ENCODE measurements at regions of chr7 and their contacts with region 1.

Region 1: GRCh38 chr7:7761340-7761980 is 43.1 kb upstream of the RPA3 start:
- DNase-seq: no peak
- H3K4me3 ChIP-seq: peak overlapping the region; percentile 10 to 25
- H3K27ac ChIP-seq: peak overlapping the region; percentile 58 to 65
- H3K4me1 ChIP-seq: no peaks in the 10 kb centered on the region
- H3K27me3 ChIP-seq: no peaks in the 10 kb centered on the region
- CTCF ChIP-seq: peak in 3 of 4 experiments; percentile 57 to 64 (median 61)
- POLR2A ChIP-seq: no peak

Region 2: GRCh38 chr7:7521259-7521658 is 240.2 kb before region 1 on chr7:
- intact Hi-C with region 1: no loop called
- DNase-seq: no peak
- H3K4me3 ChIP-seq: no peak overlapping the region
- H3K27ac ChIP-seq: no peak overlapping the region
- H3K4me1 ChIP-seq: no peaks in the 10 kb centered on the region
- H3K27me3 ChIP-seq: no peaks in the 10 kb centered on the region
- CTCF ChIP-seq: no peak
- POLR2A ChIP-seq: no peak

Region 3: GRCh38 chr7:7681179-7681935 is 80.1 kb before region 1 on chr7:
- intact Hi-C with region 1: loop called (anchors 5 kb)
- DNase-seq: peak; percentile 79
- H3K4me3 ChIP-seq: peak overlapping the region in 1 of 2 donors; percentile 7
- H3K27ac ChIP-seq: peak overlapping the region; percentile 64 to 78
- H3K4me1 ChIP-seq: no peaks in the 10 kb centered on the region
- H3K27me3 ChIP-seq: no peaks in the 10 kb centered on the region
- CTCF ChIP-seq: peak; percentile 11 to 84 (median 80)
- POLR2A ChIP-seq: no peak

Region 4: GRCh38 chr7:7968543-7969305 is 207.3 kb after region 1 on chr7 and contains the start of gene GLCCI1:
- intact Hi-C with region 1: loop called (anchors 10 kb)
- DNase-seq: peak; percentile 98
- H3K4me3 ChIP-seq: peak within 1 kb of the TSS; percentile 88 to 91
- H3K27ac ChIP-seq: peak within 1 kb of the TSS; percentile 96 to 99
- H3K4me1 ChIP-seq: no peaks in the 10 kb centered on the region
- H3K27me3 ChIP-seq: no peaks in the 10 kb centered on the region
- CTCF ChIP-seq: peak in 1 of 4 experiments; percentile 4
- POLR2A ChIP-seq: peak; percentile 92
- total RNA-seq, gene GLCCI1: 9.1 to 9.2 TPM

Region 5: GRCh38 chr7:8092140-8092539 is 330.7 kb after region 1 on chr7:
- intact Hi-C with region 1: no loop called
- DNase-seq: no peak
- H3K4me3 ChIP-seq: no peak overlapping the region
- H3K27ac ChIP-seq: no peak overlapping the region
- H3K4me1 ChIP-seq: no peaks in the 10 kb centered on the region
- H3K27me3 ChIP-seq: no peaks in the 10 kb centered on the region
- CTCF ChIP-seq: no peak
- POLR2A ChIP-seq: no peak

Region 6: DNA sequence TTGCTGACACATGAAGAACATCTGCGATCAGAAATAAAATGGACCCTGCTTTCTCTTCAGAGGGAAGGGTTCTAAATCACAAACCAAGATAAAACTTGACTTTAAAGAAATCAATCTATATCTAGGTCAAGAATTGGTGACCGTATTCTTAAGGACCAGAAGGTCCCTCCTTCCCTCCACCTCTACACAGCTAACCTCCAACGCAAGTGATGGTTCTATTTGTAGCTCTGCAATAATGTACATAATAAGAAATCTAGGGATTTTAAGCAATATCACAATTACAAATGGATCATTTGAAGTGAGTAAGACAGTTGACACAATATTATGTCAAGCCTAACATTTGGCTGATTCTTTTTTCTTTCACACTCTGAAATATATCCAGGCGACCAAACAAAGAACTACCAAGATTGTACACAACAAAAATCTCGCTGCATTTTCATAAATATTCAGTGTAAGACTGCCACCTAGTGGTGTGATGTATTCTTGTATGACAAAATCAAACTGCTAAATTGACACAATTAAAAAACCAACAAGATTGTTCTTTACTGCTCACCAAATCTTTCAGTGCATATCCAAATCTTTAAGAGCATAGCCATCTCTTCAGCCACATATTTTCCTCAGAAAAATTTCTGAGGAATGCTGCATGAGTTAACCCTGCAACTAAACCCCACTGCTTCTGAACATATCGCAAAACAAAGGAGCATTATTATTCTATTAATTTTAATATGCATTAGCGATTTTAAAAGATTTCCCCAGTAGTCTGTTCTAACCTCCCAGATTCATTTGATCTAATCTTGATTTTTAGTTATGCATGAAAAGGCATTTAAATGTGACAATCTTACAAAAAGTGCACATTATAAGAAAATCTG is 456.0 kb after region 1 on chr7:
- intact Hi-C with region 1: loop called (anchors 10 kb)
- DNase-seq: peak; percentile 68
- H3K4me3 ChIP-seq: no peak overlapping the region
- H3K27ac ChIP-seq: no peak overlapping the region
- H3K4me1 ChIP-seq: no peaks in the 10 kb centered on the region
- H3K27me3 ChIP-seq: no peaks in the 10 kb centered on the region
- CTCF ChIP-seq: peak; percentile 73 to 89 (median 86)
- POLR2A ChIP-seq: no peak